PC-9 (cell line): ENCODE measurements at regions of chr16 and their contacts with region 1.

Region 1: GRCh38 chr16:73956587-73957494 is 339.8 kb upstream of the PSMD7 start:
- DNase-seq: peak in 1 of 2 experiments; percentile 35
- H3K4me3 ChIP-seq: no peak overlapping the region
- H3K27ac ChIP-seq: no peak overlapping the region
- H3K4me1 ChIP-seq: no peaks in the 10 kb centered on the region
- H3K27me3 ChIP-seq: 0 out of 2 replicates have a peak, but pooled peaks cover 3% of the 10 kb centered on the region
- CTCF ChIP-seq: peak; percentile 82

Region 2: GRCh38 chr16:72241930-72242329 is 1714.9 kb before region 1 on chr16:
- CTCF ChIA-PET with region 1: no interaction called
- POLR2A ChIA-PET with region 1: no interaction called
- intact Hi-C with region 1: loop called (anchors 5 kb)
- DNase-seq: peak in 1 of 2 experiments; percentile 22
- H3K4me3 ChIP-seq: no peak overlapping the region
- H3K27ac ChIP-seq: no peak overlapping the region
- H3K4me1 ChIP-seq: no peaks in the 10 kb centered on the region
- H3K27me3 ChIP-seq: no peaks in the 10 kb centered on the region
- CTCF ChIP-seq: peak; percentile 79